Posterior vena cava (tissue), 2 donors: ENCODE measurements at regions of chr1 and their contacts with region 1.

Region 1: GRCh38 chr1:43868741-43869067 is 64.9 kb upstream of the ARTN start:
- DNase-seq: no peak

Region 2: GRCh38 chr1:43893006-43893405 is 24.3 kb after region 1 on chr1:
- intact Hi-C with region 1: loop called in 1 of 2 experiments (anchors 2 kb)
- DNase-seq: no peak

Region 3: DNA sequence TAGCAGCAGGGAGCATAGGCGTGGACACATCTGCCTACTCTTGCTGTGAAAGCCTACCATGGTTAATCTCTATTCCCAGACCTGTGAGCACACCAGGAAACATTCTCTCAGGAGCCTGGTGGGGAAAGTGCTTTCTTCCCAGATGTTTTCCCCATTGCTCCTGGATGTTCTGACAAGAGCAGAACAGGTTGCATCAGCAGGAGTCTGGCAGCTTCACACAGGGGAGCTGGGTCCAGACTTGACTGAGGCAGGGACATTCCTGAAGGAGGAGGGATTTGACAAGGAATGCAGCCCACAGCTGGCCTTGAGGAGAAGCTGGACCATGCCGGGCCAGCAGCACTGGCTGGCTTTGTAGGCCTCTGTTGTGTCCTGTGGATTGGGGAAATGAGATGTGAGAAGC is 43.9 kb after region 1 on chr1:
- intact Hi-C with region 1: no loop called
- DNase-seq: peak; percentile 76

Region 4: DNA sequence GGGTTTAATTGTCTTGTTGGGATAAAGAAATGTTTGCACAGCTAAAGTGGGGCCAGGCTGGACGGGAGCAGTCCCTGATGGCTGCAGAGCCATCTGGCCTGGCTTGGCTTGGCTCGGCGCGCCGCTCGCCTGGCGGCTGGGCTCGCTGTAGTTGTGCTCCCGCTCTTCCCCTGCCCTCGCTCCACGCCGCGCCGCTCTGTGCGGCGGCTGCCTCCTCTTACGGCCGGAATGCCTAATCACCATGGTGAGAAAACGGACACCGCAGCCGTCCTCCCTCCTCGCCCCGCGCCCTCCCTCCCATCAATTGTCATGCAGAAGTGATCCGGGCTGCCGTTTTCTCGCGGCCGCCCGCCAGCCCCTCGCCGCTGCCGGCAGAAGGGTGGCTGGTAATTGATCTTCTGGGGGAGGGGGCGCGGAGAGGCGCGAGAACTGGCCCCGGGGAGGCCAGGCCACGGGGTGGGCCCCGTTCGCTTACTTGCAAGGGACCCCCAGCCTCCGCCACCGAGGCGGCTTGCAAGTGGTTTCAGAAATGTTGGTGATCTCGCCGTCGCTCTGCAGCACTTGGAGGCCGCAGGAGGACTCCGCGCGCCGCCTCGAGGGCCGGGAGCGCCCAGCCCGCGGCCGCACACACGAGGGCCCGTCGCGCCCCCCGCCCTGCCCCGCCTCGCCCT is 548.8 kb after region 1 on chr1:
- intact Hi-C with region 1: no loop called
- DNase-seq: no peak

Region 5: DNA sequence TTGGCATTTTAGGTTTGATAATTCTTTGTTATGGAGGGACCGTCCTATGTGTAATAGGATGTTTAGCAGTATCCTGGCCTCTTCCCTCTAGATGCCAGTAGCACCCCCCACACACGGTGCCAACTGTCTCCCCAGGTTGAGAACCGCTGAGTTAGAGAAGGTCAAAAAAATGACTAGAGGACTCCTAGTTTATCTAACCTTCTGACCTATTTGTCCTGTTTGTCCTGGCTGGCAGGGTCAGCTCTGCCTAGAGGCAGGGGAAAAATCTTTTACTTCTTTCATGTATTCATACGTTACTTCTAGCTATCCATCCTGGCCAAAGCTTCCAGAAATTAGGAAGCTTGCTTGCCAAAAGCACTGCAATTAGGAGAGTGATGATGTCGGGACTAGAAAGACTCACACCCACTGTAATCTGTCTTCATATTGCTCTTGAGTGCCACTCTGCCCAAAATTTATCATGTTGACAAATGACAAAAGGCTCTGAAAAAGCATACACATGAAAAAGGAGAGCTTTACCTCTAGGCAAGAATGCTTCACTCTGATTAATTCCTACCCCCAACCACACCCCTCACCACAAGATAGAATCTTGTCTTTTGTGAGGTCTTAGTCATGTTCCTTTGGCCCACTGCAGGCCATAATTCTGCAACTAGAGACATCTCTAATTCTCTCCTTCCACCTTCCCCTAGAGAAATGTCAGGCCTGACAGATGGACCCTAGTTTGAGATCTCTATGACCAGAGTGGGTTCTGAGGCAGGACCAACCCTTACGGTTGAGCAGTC is 1667.5 kb after region 1 on chr1:
- intact Hi-C with region 1: loop called in 1 of 2 experiments (anchors 10 kb)
- DNase-seq: no peak